Heart left ventricle (tissue), 16 donors: ENCODE measurements at regions of chr5 and their contacts with region 1.

Region 1: GRCh38 chr5:58460732-58461286 is 923 bp upstream of the PLK2 start:
- DNase-seq: peak; percentile 91 to 95 (median 93)
- ATAC-seq: peak; percentile 81 to 86 (median 82)
- H3K4me3 ChIP-seq: peak overlapping the region; percentile 59 to 97 (median 85)
- H3K27ac ChIP-seq: peak overlapping the region; percentile 93 to 99 (median 98)
- H3K4me1 ChIP-seq: peaks cover 0 to 24% (median 9%) of the 10 kb centered on the region in 12 donors
- H3K27me3 ChIP-seq: no peaks in the 10 kb centered on the region
- CTCF ChIP-seq: peak; percentile 71 to 88 (median 82)
- POLR2A ChIP-seq: no peak

Region 2: GRCh38 chr5:57499262-57500050 is 961.4 kb before region 1 on chr5:
- intact Hi-C with region 1: loop called (anchors 1 to 5 kb)
- DNase-seq: peak in 1 of 5 donors; percentile 31
- ATAC-seq: peak in 2 of 4 donors; percentile 59 to 76
- H3K4me3 ChIP-seq: peak overlapping the region in 9 of 12 donors; percentile 4 to 42 (median 26)
- H3K27ac ChIP-seq: peak overlapping the region in 6 of 12 donors; percentile 1 to 48 (median 17)
- H3K4me1 ChIP-seq: peaks cover 0 to 56% (median 23%) of the 10 kb centered on the region in 12 donors
- H3K27me3 ChIP-seq: no peaks in the 10 kb centered on the region
- CTCF ChIP-seq: peak; percentile 59 to 85 (median 78)
- POLR2A ChIP-seq: no peak

Region 3: DNA sequence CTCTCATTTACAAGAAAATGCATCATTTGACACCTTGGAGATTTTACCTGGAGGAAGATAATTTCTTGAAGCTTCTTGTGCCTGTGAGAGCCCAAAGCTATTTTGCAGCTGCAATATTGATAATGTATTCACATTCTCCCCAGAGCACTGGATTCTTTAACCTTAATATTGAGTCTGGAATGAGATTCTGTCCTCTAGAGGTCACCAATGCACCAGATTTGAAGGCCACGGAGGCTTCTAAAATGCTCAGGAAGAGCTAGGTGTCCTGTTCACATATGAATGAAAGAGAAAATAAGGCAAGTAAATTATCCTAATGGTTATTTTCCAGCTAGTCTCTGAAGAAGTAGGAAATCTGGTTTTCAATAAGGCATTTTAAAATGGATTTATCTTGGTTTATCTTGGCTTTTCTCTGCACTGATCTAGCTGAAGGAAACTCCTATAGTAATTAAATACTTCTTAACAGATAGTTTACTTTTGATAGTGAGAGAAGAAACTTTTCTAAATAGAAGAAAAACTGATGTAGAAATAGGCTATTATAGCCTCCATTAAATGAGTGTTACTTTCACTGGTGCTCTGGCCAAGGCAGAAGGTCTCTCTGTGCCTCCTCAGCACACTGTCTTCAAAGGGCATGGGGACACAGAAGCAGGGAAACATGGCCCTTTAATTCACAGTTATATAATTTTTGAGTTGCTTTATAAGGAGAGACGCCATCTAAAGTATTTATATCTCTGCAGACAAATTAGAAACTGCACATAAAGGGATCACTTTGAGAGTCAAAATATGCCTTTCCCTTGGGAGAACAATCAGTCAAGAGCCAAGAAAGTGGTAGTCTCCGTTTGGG is 681.2 kb before region 1 on chr5:
- intact Hi-C with region 1: loop called (anchors 1 to 2 kb)
- DNase-seq: peak in 2 of 5 donors; percentile 41 to 43
- ATAC-seq: peak; percentile 78 to 88 (median 84)
- H3K4me3 ChIP-seq: peak overlapping the region in 3 of 12 donors; percentile 1 to 8 (median 7)
- H3K27ac ChIP-seq: peak overlapping the region in 11 of 12 donors; percentile 2 to 73 (median 50)
- H3K4me1 ChIP-seq: peaks cover 5 to 40% (median 17%) of the 10 kb centered on the region in 12 donors
- H3K27me3 ChIP-seq: no peaks in the 10 kb centered on the region
- CTCF ChIP-seq: peak; percentile 46 to 82 (median 71)
- POLR2A ChIP-seq: no peak

Region 4: DNA sequence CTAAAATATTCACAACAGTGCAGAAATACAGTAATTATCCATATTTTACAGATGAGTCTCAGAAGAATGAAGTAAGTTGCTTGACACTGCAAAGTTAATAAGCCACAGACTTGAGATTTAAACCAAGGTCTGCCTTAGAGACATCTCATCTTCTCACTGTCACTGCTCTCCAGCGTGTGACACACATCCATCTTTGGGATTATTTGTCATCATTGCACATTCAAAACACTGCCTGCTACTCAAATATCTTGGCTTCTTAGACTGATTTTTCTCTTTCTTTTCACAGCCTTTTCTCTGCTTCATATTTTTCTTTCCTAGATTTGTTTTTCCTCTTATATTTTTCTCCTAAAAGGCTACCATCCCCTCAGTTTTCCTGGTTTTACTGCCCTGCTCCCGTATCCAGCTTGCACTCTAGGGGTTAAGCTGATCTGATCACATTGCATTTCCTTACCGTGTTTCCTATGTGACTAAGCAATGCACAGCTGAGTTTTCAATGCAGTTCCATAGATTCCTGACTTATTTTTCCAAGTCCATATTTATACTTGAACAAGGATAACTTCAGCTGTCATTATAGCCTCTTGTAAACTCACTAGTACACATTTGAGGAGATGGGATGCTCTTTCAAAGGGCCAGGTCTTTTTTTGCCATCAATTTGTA is 353.9 kb before region 1 on chr5:
- intact Hi-C with region 1: no loop called
- DNase-seq: no peak
- ATAC-seq: no peak
- H3K4me3 ChIP-seq: no peak overlapping the region
- H3K27ac ChIP-seq: no peak overlapping the region
- H3K4me1 ChIP-seq: peaks cover 0 to 14% (median 0%) of the 10 kb centered on the region in 12 donors
- H3K27me3 ChIP-seq: no peaks in the 10 kb centered on the region
- CTCF ChIP-seq: no peak
- POLR2A ChIP-seq: no peak

Region 5: GRCh38 chr5:58117542-58117941 is 343.3 kb before region 1 on chr5:
- intact Hi-C with region 1: loop called in 1 of 10 experiments (anchors 5 kb)
- DNase-seq: no peak
- ATAC-seq: no peak
- H3K4me3 ChIP-seq: no peak overlapping the region
- H3K27ac ChIP-seq: peak overlapping the region in 1 of 12 donors; percentile 28
- H3K4me1 ChIP-seq: peaks cover 0 to 2% (median 0%) of the 10 kb centered on the region in 12 donors
- H3K27me3 ChIP-seq: no peaks in the 10 kb centered on the region
- CTCF ChIP-seq: no peak
- POLR2A ChIP-seq: no peak

Region 6: DNA sequence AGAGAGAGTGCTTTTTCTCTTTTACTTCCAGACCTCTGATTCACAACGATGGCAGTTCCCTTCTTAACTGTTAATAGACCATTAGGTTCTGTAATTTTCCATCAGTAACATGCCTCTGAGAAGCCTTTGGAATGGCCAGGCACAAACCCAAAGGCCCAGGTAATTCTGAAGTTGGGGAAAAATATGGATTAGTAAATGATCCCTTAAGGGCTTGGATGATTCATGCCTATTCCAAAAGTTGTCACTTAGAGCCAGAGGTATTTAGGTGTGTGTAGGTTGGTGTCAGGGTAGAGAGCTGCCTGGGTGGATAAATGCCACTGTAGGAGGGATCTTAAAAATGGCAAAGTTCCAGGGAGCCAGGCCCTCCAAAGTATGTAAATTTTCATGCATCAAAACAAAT is 229.8 kb before region 1 on chr5:
- intact Hi-C with region 1: loop called in 2 of 10 experiments (anchors 5 kb)
- DNase-seq: no peak
- ATAC-seq: no peak
- H3K4me3 ChIP-seq: no peak overlapping the region
- H3K27ac ChIP-seq: no peak overlapping the region
- H3K4me1 ChIP-seq: peaks cover 0 to 29% (median 4%) of the 10 kb centered on the region in 12 donors
- H3K27me3 ChIP-seq: no peaks in the 10 kb centered on the region
- CTCF ChIP-seq: no peak
- POLR2A ChIP-seq: no peak

Region 7: GRCh38 chr5:58266402-58266801 is 194.4 kb before region 1 on chr5:
- intact Hi-C with region 1: loop called in 5 of 10 experiments (anchors 5 to 10 kb)
- DNase-seq: no peak
- ATAC-seq: no peak
- H3K4me3 ChIP-seq: no peak overlapping the region
- H3K27ac ChIP-seq: no peak overlapping the region
- H3K4me1 ChIP-seq: peaks cover 0 to 23% (median 8%) of the 10 kb centered on the region in 12 donors
- H3K27me3 ChIP-seq: no peaks in the 10 kb centered on the region
- CTCF ChIP-seq: no peak
- POLR2A ChIP-seq: no peak